Activated CD4-positive, alpha-beta memory T cell treated with anti-CD3 and anti-CD28 coated beads for 36 hours (primary cell): ENCODE measurements at regions of chr9 and their contacts with region 1.

Region 1: DNA sequence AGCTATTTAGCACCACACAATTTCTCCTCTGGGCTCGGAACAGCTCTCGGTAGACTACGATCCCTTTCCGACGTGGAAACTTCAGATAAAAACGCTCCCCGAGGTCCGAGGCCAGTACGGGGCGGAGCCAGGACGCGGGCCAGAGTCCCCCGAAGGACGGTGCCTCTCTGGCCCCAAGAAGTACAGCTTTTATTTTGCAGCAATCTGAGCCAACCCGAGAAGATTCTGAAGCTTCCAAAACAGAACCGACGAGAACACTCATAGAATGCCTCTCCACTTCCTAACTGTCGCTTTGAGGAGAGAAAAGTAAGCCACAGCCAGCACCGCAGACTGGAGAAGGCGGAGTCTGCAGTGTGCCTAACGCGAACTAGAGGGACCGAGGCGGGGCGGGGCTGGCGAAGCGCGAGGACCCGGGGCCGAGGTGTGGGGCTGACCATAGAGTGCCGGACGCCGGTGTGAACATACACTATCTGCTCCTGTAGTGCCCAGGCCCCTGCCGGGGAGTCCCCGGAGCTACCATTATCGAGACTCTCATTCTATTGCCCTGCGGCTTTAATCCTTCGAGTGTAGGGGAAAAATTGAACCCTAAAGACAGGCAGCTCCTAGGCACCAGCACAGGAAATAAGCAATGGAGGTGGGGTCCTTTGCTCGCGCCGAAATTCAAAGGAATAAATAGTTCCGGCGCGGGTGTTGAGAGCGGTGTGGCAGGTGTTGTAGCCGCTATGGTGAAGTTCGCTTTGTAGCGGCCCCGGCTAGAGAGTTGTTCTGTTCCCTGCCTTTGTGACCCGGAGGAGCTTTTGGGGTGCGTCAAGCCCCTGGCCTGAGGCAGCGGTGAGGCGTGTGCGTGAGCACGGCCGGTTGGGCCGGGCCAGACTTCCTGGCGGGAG is at the start of gene SMC2:
- DNase-seq: peak; percentile 94
- H3K4me3 Mint-ChIP-seq: peak within 1 kb of the TSS; percentile 90
- H3K27ac Mint-ChIP-seq: peak within 1 kb of the TSS; percentile 99
- H3K4me1 Mint-ChIP-seq: peaks cover 32% of the 10 kb centered on the region
- H3K27me3 Mint-ChIP-seq: no peaks in the 10 kb centered on the region
- total RNA-seq, gene SMC2: 61.0 to 61.9 TPM

Region 2: DNA sequence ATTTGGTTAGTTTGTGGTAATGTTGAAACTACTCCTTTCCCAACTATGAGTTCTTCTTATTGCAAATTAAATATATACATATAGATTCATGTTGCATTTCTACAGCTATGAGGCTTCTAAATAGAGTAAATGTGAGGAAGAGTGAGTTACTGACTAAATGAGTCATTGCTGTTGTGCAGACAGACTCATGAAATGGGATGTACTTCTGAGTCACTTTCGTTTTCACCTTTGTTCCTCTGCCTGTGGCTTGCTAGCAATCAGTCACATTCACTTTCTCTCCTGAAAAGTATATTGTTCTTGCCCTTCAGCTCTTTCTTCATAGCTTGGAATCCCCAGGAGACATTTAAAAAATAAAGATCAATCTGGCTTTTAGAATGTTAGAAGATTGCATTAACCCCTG is 295.3 kb before region 1 on chr9:
- CTCF ChIA-PET with region 1: no interaction called
- POLR2A ChIA-PET with region 1: no interaction called
- intact Hi-C with region 1: loop called (anchors 1 kb)
- DNase-seq: peak; percentile 15
- H3K4me3 Mint-ChIP-seq: no peak overlapping the region
- H3K27ac Mint-ChIP-seq: no peak overlapping the region
- H3K4me1 Mint-ChIP-seq: peaks cover 5% of the 10 kb centered on the region
- H3K27me3 Mint-ChIP-seq: no peaks in the 10 kb centered on the region

Region 3: GRCh38 chr9:104028827-104029226 is 65.1 kb before region 1 on chr9:
- CTCF ChIA-PET with region 1: no interaction called
- POLR2A ChIA-PET with region 1: no interaction called
- intact Hi-C with region 1: loop called (anchors 1 kb)
- DNase-seq: peak; percentile 49
- H3K4me3 Mint-ChIP-seq: no peak overlapping the region
- H3K27ac Mint-ChIP-seq: no peak overlapping the region
- H3K4me1 Mint-ChIP-seq: peaks cover 23% of the 10 kb centered on the region
- H3K27me3 Mint-ChIP-seq: no peaks in the 10 kb centered on the region

Region 4: GRCh38 chr9:104586496-104587180 is 492.7 kb after region 1 on chr9:
- CTCF ChIA-PET with region 1: no interaction called
- POLR2A ChIA-PET with region 1: no interaction called
- intact Hi-C with region 1: no loop called
- DNase-seq: no peak
- H3K4me3 Mint-ChIP-seq: no peak overlapping the region
- H3K27ac Mint-ChIP-seq: no peak overlapping the region
- H3K4me1 Mint-ChIP-seq: no peaks in the 10 kb centered on the region
- H3K27me3 Mint-ChIP-seq: no peaks in the 10 kb centered on the region

Region 5: GRCh38 chr9:105447814-105448812 is 1354.2 kb after region 1 on chr9 and contains the start of gene FSD1L:
- CTCF ChIA-PET with region 1: no interaction called
- POLR2A ChIA-PET with region 1: no interaction called
- intact Hi-C with region 1: loop called (anchors 5 kb)
- DNase-seq: peak; percentile 90
- H3K4me3 Mint-ChIP-seq: peak within 1 kb of the TSS; percentile 63
- H3K27ac Mint-ChIP-seq: peak within 1 kb of the TSS; percentile 49
- H3K4me1 Mint-ChIP-seq: peaks cover 13% of the 10 kb centered on the region
- H3K27me3 Mint-ChIP-seq: no peaks in the 10 kb centered on the region
- total RNA-seq, gene FSD1L: 3.2 to 3.6 TPM